ENCODE measurements at regions of chr1 and their contacts with region 1.

Region 1: DNA sequence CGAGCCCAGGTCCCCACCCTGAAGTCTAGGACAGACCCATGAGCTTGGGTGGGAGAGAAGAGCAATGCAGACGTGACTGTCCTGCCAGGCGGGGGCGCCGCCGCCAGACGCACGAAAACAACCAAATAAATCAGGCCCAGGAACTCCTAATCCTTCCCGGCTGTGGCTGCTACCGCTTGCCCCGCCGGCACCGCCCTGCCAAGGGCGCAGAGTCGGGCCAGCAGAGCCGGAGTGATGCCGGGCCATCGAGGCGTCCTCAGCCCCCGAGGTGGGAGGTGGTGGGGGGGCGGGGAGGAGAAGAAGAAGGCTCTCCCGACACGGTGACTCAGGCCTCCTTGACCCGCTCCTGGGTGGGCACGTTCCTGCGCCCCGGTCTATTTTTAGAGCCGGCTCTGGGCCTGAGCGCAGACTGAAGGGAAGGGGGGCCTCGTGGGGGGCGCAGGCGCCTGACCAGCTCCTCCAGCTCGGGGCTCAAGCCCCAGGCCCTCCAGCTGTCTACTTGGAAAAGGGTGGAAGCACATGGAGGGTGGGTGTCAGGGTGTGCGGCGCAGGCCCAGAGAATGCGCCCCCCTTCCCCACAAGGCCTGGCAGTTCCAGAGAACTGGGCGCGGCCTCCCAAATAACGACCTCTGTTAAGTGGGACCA is 10.7 kb upstream of the COL16A1 start:
- DNase-seq: peak; percentile 82
- ATAC-seq: peak; percentile 66

Region 2: GRCh38 chr1:31658721-31659120 is 55.8 kb before region 1 on chr1:
- intact Hi-C with region 1: no loop called
- DNase-seq: no peak
- ATAC-seq: no peak

Region 3: GRCh38 chr1:31669786-31670592 is 44.6 kb before region 1 on chr1:
- intact Hi-C with region 1: loop called (anchors 5 kb)
- DNase-seq: peak; percentile 90
- ATAC-seq: peak; percentile 75

Region 4: DNA sequence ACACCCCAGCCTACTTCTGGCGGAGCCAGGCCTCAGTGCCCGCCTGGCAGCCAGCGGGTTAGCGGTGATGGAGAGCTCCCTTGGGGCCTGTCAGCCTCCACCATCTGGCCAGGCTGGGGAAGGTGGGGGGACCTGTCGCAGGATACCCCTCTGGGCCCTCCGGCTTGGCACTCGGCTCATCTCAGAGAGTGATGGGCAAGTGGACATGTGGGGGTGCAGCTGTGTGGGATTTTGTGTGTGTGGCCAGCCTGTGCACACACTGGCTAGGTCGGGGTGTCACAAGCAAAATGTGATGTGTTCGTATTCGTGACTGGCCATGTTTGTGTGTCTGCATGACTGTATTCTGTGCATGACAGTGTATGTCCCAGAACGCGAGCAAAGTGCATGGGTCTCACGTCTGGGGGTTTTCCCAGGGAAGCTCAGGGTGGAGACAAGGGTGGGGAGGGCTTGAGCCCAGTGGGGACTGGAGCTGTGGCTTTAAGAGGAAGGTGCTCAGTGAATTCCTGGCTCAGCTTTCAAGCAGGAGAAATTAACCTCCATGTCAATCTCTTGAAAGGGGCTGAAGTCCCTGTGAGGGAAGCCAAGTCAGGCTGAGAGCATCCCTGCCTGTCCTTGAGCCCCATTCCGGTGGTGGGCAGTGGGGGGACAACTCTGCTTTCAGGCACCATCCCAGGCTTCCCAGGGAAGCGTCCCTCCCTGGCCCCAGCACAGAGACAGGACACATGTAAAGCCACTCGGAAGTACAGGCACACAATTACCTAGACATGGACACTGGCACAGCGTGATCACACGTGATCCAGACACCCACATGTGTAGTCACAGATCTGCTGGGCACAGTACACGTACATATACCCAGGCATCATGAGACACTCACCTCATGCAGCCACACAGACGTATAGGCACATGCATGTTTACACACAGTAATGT is 70.7 kb after region 1 on chr1:
- intact Hi-C with region 1: no loop called
- DNase-seq: no peak
- ATAC-seq: no peak

Measured in left ventricle myocardium superior (tissue), 1 donor.